Sciatic nerve (tissue), 2 donors: ENCODE measurements at regions of chr12 and their contacts with region 1.

Region 1: GRCh38 chr12:124194893-124195566 is 99.9 kb upstream of the RFLNA start:
- DNase-seq: no peak
- ATAC-seq: no peak

Region 2: GRCh38 chr12:124150168-124150567 is 44.9 kb before region 1 on chr12:
- intact Hi-C with region 1: loop called (anchors 1 kb)
- DNase-seq: no peak
- ATAC-seq: no peak

Region 3: GRCh38 chr12:124208481-124208880 is 13.5 kb after region 1 on chr12:
- intact Hi-C with region 1: no loop called
- DNase-seq: no peak
- ATAC-seq: peak; percentile 37

Region 4: DNA sequence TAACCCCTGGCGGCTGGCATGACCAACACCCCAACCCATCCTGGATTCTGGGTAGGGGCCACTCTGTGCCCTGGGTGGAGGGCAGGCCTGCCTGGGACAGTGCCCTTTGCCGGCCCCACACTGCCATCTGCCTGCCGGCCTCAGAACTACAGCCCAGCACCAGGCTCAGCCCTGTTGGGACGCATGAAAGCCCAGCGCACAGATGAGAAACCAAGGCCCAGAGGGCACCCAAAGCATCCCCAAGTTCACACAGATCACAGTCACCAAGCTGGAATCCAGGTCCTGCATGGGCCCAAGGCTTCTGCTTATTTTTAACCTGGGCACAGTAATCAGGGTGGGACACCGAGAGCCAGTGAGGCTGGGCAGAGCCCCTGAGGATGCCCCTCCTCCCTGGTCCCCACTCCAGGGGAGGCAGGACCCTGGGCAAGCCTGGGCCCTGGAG is 126.0 kb after region 1 on chr12:
- intact Hi-C with region 1: no loop called
- DNase-seq: peak; percentile 90
- ATAC-seq: peak; percentile 85

Region 5: DNA sequence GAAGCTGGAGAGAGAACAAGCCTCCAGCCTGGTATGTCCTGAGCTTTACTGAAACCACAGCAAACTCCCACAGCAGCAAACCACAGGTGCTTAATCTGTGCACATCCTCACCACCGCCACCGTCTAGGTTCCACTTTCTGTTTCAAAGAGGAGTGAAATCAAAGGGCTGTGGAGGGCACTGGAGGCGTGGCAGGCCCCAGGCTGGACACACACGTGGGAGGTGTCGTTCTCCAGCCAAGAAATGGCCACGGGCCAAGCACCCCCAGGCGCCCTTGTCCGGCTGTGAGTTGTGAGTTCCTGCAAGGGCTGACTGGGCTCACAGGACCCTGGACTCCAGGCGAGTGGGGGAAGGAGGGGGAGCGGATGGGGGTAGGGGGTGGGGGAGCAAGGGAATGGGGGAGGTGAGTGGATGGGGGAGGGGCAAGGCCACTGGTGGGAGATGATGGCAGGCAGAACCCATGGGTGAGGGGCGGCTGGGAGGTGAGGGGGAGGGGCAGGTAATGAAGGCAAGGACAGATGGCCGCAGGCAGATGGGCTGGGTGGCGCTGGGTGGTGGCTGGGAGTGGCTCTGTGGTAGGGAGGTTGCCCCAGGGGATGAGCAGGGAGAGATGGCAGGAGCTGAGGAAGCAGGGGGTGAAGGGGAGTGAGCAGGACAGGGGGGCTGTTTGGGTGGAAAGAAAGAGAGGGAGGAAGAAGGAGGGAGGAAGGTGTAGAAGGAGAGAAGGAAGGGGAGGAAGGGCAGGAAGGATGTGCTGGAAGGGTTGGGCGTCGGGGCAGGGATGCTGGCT is 285.6 kb after region 1 on chr12:
- intact Hi-C with region 1: no loop called
- DNase-seq: no peak
- ATAC-seq: peak; percentile 80